Calu3 (cell line): ENCODE measurements at regions of chr1 and their contacts with region 1.

Region 1: GRCh38 chr1:86774305-86775295 is 70.2 kb downstream of the SH3GLB1 start:
- DNase-seq: peak; percentile 68
- H3K4me3 Mint-ChIP-seq: peak overlapping the region; percentile 54
- H3K27ac Mint-ChIP-seq: peak overlapping the region; percentile 66
- H3K4me1 Mint-ChIP-seq: peaks cover 56% of the 10 kb centered on the region
- H3K27me3 Mint-ChIP-seq: no peaks in the 10 kb centered on the region
- CTCF ChIP-seq: no peak

Region 2: DNA sequence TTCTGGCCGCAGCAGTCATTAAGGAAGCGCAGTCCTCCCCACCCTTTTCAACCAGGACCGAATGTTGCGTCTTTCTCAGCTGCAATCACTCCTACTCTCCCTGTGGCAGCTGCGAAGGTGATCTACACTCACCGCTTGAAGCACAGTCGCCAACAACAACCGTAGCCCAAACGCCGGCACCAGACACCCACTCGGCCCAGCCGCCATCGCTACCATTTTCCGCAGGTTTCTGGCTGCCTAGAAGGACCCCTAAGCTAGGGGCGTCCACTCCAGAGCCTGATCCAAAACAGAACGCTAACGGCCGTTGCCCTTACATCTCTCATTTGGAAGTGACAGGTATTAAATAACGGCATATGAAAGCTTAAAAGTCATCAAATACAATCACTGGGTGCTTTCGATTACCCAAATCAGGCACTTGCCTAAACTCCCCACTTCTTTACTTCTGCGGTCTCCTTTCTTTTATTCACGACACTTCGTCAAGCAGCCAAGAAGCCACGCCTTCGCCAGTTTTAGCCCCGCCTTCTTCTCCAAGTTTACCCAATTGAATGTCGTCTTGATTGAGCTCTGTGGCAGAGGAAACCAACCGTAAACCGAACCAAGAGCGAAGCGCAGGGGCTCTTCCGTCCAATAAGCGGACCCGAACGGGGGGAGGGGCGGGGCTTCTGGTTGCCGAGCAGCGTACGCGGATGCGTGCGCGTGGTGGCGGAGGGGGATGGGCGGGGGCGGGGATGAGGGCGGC is 139.5 kb after region 1 on chr1 and contains the start of gene SELENOF:
- CTCF ChIA-PET with region 1: interaction called, 13 read pairs
- intact Hi-C with region 1: loop called (anchors 10 kb)
- DNase-seq: peak; percentile 99
- H3K4me3 Mint-ChIP-seq: no peak within 1 kb of the TSS
- H3K27ac Mint-ChIP-seq: no peak within 1 kb of the TSS
- H3K4me1 Mint-ChIP-seq: peaks cover 36% of the 10 kb centered on the region
- H3K27me3 Mint-ChIP-seq: no peaks in the 10 kb centered on the region
- CTCF ChIP-seq: no peak
- total RNA-seq, gene SELENOF: 296 and 302 TPM in 2 replicates